GM12878 (cell line): ENCODE measurements at regions of chr6 and their contacts with region 1.

Region 1: DNA sequence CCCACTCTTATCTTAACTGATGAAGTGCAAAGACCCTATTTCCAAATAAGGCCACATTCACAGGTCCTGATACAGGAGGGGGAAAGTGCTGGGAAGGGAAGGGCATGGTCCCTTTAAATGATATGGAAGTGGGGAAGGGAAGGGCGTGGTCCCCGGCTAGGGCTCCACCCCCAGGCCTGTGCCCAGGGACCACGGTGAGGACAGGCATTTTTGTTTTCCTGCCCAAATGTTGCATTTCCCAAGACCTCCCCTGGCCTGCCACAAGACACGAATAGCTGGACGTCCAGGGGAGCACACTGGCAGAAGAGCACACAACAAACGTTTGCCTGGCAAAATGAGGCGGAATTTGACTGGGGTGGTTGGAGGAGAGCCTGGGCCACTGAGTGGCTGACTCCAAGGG is 16.1 kb upstream of the HFE start:
- DNase-seq: no peak
- ATAC-seq: no peak
- H3K4me3 ChIP-seq: no peak overlapping the region
- H3K27ac ChIP-seq: no peak overlapping the region
- H3K4me1 ChIP-seq: no peaks in the 10 kb centered on the region
- H3K27me3 ChIP-seq: no peaks in the 10 kb centered on the region
- CTCF ChIP-seq: no peak
- EP300 ChIP-seq: no peak
- POLR2A ChIP-seq: no peak
- RAD21 ChIP-seq: no peak

Region 2: GRCh38 chr6:25706314-25707014 is 364.7 kb before region 1 on chr6:
- CTCF ChIA-PET with region 1: no interaction called
- POLR2A ChIA-PET with region 1: no interaction called
- RAD21 ChIA-PET with region 1: no interaction called
- SMC1A ChIA-PET with region 1: no interaction called
- in situ Hi-C with region 1: no loop called
- intact Hi-C with region 1: no loop called
- DNase-seq: no peak
- ATAC-seq: no peak
- H3K4me3 ChIP-seq: no peak overlapping the region
- H3K27ac ChIP-seq: no peak overlapping the region
- H3K4me1 ChIP-seq: no peaks in the 10 kb centered on the region
- H3K27me3 ChIP-seq: no peaks in the 10 kb centered on the region; a peak in 1 of 4 replicates
- CTCF ChIP-seq: no peak
- EP300 ChIP-seq: no peak
- POLR2A ChIP-seq: no peak
- RAD21 ChIP-seq: no peak

Region 3: DNA sequence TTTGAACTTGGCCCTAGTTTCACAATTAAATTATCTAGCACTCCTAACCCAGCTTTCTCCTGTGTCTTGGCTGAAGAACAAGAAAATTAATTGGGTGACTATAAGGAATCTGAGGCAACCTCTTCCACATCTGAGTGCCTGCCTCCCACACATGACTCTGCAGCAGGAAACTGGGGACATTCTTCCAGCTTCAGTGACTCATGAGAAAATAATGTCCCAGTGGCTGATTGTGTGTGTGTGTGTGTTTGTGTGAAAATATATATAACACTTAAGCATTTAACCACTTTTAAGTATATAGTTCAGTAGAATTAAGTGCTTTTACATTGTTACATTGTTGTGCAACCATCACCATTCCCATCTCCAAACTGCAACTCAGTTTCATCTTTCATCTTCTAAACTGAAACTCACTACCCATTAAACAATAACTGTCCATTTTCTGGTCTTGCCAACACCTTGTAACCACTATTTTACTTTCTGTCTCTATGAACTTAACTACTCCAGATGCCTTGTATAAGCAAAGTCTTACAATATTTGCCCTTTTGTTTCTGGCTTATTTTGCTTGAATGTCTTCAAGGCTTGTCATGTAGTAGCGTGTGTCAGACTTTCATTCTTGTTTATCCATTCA is 99.8 kb before region 1 on chr6:
- CTCF ChIA-PET with region 1: no interaction called
- POLR2A ChIA-PET with region 1: no interaction called
- RAD21 ChIA-PET with region 1: no interaction called
- SMC1A ChIA-PET with region 1: no interaction called
- in situ Hi-C with region 1: no loop called
- intact Hi-C with region 1: no loop called
- DNase-seq: no peak
- ATAC-seq: peak; percentile 19
- H3K4me3 ChIP-seq: 0 out of 2 replicates have a peak overlapping the region, but pooled peaks have one; percentile 13
- H3K27ac ChIP-seq: no peak overlapping the region; the same call in 1 of the 2 replicates
- H3K4me1 ChIP-seq: peaks cover 23% of the 10 kb centered on the region
- H3K27me3 ChIP-seq: no peaks in the 10 kb centered on the region
- CTCF ChIP-seq: no peak
- EP300 ChIP-seq: no peak
- POLR2A ChIP-seq: no peak
- RAD21 ChIP-seq: no peak

Region 4: GRCh38 chr6:26087284-26088115 is 16.4 kb after region 1 on chr6 and contains the start of gene HFE:
- CTCF ChIA-PET with region 1: interaction called, 897 read pairs
- POLR2A ChIA-PET with region 1: interaction called, 21 read pairs
- RAD21 ChIA-PET with region 1: interaction called, 286 read pairs
- SMC1A ChIA-PET with region 1: interaction called, 645 read pairs
- in situ Hi-C with region 1: no loop called
- intact Hi-C with region 1: no loop called
- DNase-seq: no peak
- ATAC-seq: peak; percentile 64
- H3K4me3 ChIP-seq: peak within 1 kb of the TSS; percentile 78
- H3K27ac ChIP-seq: peak within 1 kb of the TSS; percentile 75
- H3K4me1 ChIP-seq: peaks cover 15% of the 10 kb centered on the region
- H3K27me3 ChIP-seq: no peaks in the 10 kb centered on the region
- CTCF ChIP-seq: no peak
- EP300 ChIP-seq: no peak
- POLR2A ChIP-seq: no peak
- RAD21 ChIP-seq: no peak
- polyA plus RNA-seq, gene HFE: 0.52 to 1.2 TPM